ENCODE measurements at regions of chr14 and their contacts with region 1.

Region 1: DNA sequence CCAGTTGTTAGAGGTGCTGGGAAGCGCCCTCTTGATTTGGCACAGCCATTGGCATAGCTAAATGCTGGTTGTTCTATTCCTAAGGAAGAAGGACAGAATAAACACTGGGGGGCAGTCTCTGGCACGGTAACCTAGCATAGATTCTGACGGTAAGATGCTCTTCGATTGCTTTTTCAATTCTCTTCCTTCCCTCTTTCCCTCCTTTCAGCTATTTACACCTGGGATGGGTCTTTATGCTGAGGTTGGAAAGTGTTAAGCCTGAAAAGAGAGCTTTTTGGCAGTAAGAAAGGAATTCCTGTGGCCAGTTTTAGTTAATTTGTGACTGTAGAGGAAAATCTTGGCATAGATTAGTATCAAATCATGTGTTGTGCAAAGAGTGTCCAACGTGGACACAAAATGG is 162.8 kb downstream of the SNAPC1 start:
- DNase-seq: peak; percentile 70
- ATAC-seq: peak; percentile 65
- H3K4me3 ChIP-seq: no peak overlapping the region
- H3K4me3 Mint-ChIP-seq: no peak overlapping the region
- H3K27ac ChIP-seq: no peak overlapping the region
- H3K27ac Mint-ChIP-seq: peak overlapping the region; percentile 23
- H3K4me1 ChIP-seq: peaks cover 3 to 8% of the 10 kb centered on the region in 2 donors
- H3K4me1 Mint-ChIP-seq: peaks cover 29% of the 10 kb centered on the region
- H3K27me3 ChIP-seq: peaks cover 0 to 4% (median 0%) of the 10 kb centered on the region in 4 experiments
- H3K27me3 Mint-ChIP-seq: peaks cover 3% of the 10 kb centered on the region
- CTCF ChIP-seq: peak; percentile 66

Region 2: GRCh38 chr14:61456720-61457119 is 468.3 kb before region 1 on chr14:
- CTCF ChIA-PET with region 1: interaction called, 3 read pairs
- POLR2A ChIA-PET with region 1: no interaction called
- intact Hi-C with region 1: loop called (anchors 1 kb)
- DNase-seq: peak; percentile 89
- ATAC-seq: peak; percentile 87
- H3K4me3 ChIP-seq: no peak overlapping the region
- H3K4me3 Mint-ChIP-seq: no peak overlapping the region
- H3K27ac ChIP-seq: no peak overlapping the region
- H3K27ac Mint-ChIP-seq: no peak overlapping the region
- H3K4me1 ChIP-seq: peaks cover 4 to 11% of the 10 kb centered on the region in 2 donors
- H3K4me1 Mint-ChIP-seq: peaks cover 13% of the 10 kb centered on the region
- H3K27me3 ChIP-seq: no peaks in the 10 kb centered on the region
- H3K27me3 Mint-ChIP-seq: no peaks in the 10 kb centered on the region
- CTCF ChIP-seq: peak; percentile 89

Region 3: DNA sequence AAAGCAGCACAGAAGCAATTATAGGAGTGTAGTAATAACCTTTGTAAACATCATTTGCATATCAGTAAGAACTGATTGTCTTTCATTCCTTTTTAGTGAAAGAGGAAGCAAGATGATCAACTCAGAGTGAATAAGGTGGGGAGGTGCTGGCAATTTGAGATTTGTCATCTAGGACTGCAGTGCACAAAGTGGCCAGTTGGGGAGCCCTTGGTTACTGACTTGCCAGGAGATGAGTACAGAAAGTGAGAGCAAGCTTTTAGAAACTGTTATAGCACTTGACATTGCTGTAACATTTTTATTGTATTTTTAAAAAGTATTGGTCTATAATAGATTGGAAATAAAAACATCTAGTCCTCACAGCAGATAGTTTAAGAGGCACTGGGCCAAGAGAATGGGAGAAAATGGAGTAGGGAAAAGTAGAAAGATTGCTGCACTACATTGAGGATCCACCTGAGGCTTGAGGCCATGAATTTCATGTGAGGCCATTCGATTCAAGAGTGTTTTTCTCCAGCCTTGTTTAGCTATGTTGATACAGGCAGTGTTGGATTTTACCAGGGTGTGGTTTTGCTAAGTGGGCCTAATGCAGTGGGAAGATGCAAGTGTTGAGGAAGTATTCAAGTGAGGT is 64.6 kb before region 1 on chr14:
- CTCF ChIA-PET with region 1: interaction called, 12 read pairs
- POLR2A ChIA-PET with region 1: no interaction called
- intact Hi-C with region 1: loop called (anchors 2 kb)
- DNase-seq: peak; percentile 80
- ATAC-seq: peak; percentile 100
- H3K4me3 ChIP-seq: no peak overlapping the region
- H3K4me3 Mint-ChIP-seq: no peak overlapping the region
- H3K27ac ChIP-seq: no peak overlapping the region
- H3K27ac Mint-ChIP-seq: no peak overlapping the region
- H3K4me1 ChIP-seq: peaks cover 4 to 7% of the 10 kb centered on the region in 2 donors
- H3K4me1 Mint-ChIP-seq: peaks cover 10% of the 10 kb centered on the region
- H3K27me3 ChIP-seq: peaks cover 0 to 3% (median 0%) of the 10 kb centered on the region in 4 experiments
- H3K27me3 Mint-ChIP-seq: peaks cover 14% of the 10 kb centered on the region
- CTCF ChIP-seq: peak; percentile 90

Region 4: GRCh38 chr14:62369919-62370560 is 445.0 kb after region 1 on chr14:
- CTCF ChIA-PET with region 1: no interaction called
- POLR2A ChIA-PET with region 1: no interaction called
- intact Hi-C with region 1: no loop called
- DNase-seq: no peak
- ATAC-seq: no peak
- H3K4me3 ChIP-seq: no peak overlapping the region
- H3K4me3 Mint-ChIP-seq: no peak overlapping the region
- H3K27ac ChIP-seq: no peak overlapping the region
- H3K27ac Mint-ChIP-seq: no peak overlapping the region
- H3K4me1 ChIP-seq: no peaks in the 10 kb centered on the region
- H3K4me1 Mint-ChIP-seq: no peaks in the 10 kb centered on the region
- H3K27me3 ChIP-seq: no peaks in the 10 kb centered on the region
- H3K27me3 Mint-ChIP-seq: no peaks in the 10 kb centered on the region
- CTCF ChIP-seq: no peak